Activated naive CD4-positive, alpha-beta T cell treated with anti-CD3 and anti-CD28 coated beads, Interleukin-2, amount 10 ng/mL, durations not matched to agents 7 days and 5 days (primary cell): ENCODE measurements at regions of chr3 and their contacts with region 1.

Region 1: DNA sequence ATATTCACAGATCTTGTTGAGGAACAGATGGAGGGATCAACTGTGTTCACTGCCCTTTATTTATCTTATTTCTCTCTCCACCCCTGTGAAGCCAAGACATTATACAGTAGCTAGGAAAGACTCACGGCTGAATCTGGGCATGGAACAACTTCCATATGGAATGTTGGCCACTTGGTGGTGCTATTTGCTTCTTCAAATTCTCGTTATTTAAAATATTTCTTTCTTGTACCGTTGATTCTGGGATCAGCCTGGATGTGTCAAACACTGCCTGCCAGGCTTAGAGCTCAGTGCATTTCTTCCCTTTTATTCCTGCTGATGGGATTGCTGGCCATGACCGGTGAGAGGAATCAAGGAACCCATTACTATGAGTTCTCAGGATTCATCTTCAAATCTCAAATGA is 17.5 kb upstream of the GASK1A start:
- DNase-seq: peak; percentile 33
- H3K4me3 Mint-ChIP-seq: no peak overlapping the region
- H3K27ac Mint-ChIP-seq: no peak overlapping the region
- H3K4me1 Mint-ChIP-seq: peaks cover 7% of the 10 kb centered on the region
- H3K27me3 Mint-ChIP-seq: peaks cover 4% of the 10 kb centered on the region

Region 2: DNA sequence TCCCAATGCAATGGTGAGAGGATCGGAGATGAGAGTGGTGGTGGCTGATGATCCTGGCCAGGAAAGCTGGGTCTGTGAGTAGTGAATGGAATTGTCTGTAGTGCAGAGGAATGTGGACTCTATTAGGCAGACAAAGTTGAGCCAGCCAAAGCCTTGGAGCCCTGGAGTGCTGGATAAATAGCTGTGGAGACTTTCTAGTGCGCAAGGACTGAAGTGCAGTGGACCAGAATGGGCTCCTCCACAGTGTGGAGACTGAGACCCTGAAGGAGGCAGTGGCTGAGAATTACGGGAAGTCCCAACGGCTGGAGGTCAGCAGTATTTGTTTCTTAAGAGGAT is 54.8 kb before region 1 on chr3:
- CTCF ChIA-PET with region 1: no interaction called
- DNase-seq: no peak
- H3K4me3 Mint-ChIP-seq: peak overlapping the region; percentile 1
- H3K27ac Mint-ChIP-seq: no peak overlapping the region
- H3K4me1 Mint-ChIP-seq: peaks cover 8% of the 10 kb centered on the region
- H3K27me3 Mint-ChIP-seq: peaks cover 45% of the 10 kb centered on the region

Region 3: GRCh38 chr3:43071313-43071893 is 109.8 kb after region 1 on chr3:
- CTCF ChIA-PET with region 1: interaction called, 17 read pairs
- DNase-seq: no peak
- H3K4me3 Mint-ChIP-seq: no peak overlapping the region
- H3K27ac Mint-ChIP-seq: no peak overlapping the region
- H3K4me1 Mint-ChIP-seq: no peaks in the 10 kb centered on the region
- H3K27me3 Mint-ChIP-seq: no peaks in the 10 kb centered on the region

Region 4: DNA sequence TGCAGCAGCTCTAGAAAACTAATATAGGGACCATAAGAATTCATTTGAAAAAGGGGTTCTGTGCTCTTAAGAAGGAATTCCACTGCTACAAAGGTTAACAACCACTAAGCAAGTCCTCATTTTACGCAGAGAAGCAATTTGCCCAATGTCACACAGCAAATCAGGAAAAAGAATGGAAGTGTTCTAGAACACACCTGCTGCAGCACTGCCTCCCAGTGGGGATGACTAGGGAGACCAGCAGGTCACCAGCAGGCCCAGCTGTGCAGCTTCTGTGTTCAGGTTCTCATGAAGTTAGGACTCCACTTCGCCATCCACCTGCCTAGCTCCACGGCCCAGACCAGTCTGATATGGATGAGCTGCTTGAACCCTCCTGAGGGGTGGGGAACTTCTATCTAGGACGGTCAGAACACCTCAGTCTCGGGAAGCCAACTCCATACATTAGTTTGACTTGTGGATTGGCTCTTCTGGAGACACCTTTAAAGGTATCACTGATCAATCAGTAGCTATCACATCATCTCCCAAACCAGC is 125.7 kb after region 1 on chr3:
- CTCF ChIA-PET with region 1: interaction called, 13 read pairs
- DNase-seq: no peak
- H3K4me3 Mint-ChIP-seq: no peak overlapping the region
- H3K27ac Mint-ChIP-seq: no peak overlapping the region
- H3K4me1 Mint-ChIP-seq: peaks cover 4% of the 10 kb centered on the region
- H3K27me3 Mint-ChIP-seq: no peaks in the 10 kb centered on the region

Region 5: GRCh38 chr3:43503067-43503728 is 541.6 kb after region 1 on chr3:
- CTCF ChIA-PET with region 1: interaction called, 13 read pairs
- DNase-seq: no peak
- H3K4me3 Mint-ChIP-seq: no peak overlapping the region
- H3K27ac Mint-ChIP-seq: no peak overlapping the region
- H3K4me1 Mint-ChIP-seq: peaks cover 43% of the 10 kb centered on the region
- H3K27me3 Mint-ChIP-seq: no peaks in the 10 kb centered on the region